ENCODE measurements at regions of chr2 and their contacts with region 1.

Region 1: GRCh38 chr2:64750817-64751285 is 97.1 kb upstream of the SERTAD2 start:
- DNase-seq: peak; percentile 99
- ATAC-seq: peak; percentile 94

Region 2: GRCh38 chr2:64523666-64524603 is 226.9 kb before region 1 on chr2 and contains the start of gene AFTPH:
- intact Hi-C with region 1: loop called (anchors 5 kb)
- DNase-seq: peak; percentile 99
- ATAC-seq: peak; percentile 99
- total RNA-seq, gene AFTPH: 14.0 TPM

Region 3: GRCh38 chr2:64644177-64645004 is 106.5 kb before region 1 on chr2:
- intact Hi-C with region 1: loop called (anchors 1 kb)
- DNase-seq: peak; percentile 92
- ATAC-seq: peak; percentile 92

Region 4: DNA sequence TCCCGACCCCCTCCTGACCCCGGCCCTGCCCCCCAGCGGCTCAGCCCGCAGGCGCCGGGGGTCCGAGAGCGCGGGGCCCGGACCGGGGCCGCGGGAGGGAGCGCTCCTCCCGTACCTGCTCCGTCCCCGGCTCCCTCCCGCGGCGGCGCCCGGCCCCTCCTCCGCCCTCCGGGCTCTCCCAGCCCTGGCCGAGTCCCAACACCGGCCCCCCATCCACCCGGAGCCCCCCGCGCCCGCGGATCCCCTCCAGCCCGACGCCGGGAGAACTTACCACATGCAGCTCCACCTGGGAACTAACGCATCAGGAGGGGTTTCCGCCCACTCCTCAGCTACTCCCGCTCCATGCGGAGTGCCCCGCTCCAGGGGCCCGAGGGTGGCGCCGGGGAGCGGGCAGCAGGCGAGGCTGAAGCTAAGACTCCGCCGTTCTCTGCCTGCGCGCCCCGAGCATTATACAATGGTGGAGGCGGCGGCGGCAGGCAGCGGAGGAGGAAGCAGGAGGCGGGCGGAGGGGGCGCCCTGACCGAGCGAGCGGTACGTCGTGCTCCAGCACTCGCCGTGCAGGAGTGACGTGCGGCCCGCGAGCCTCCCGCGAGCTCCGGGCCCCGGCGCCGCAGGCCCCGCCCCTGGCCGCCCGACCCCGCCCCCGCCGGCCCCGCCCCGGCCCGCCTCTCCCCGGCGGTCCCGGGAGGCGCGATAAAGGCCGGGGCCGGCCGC is 97.3 kb before region 1 on chr2 and contains the start of gene SERTAD2:
- intact Hi-C with region 1: loop called (anchors 1 kb)
- DNase-seq: peak; percentile 96
- ATAC-seq: peak; percentile 93
- total RNA-seq, gene SERTAD2: 13.6 TPM

Region 5: GRCh38 chr2:64767670-64768468 is 17.0 kb after region 1 on chr2:
- intact Hi-C with region 1: loop called (anchors 1 kb)
- DNase-seq: peak; percentile 92
- ATAC-seq: peak; percentile 96

Region 6: GRCh38 chr2:64831134-64831976 is 80.5 kb after region 1 on chr2:
- intact Hi-C with region 1: loop called (anchors 2 kb)
- DNase-seq: peak; percentile 93
- ATAC-seq: peak; percentile 97

Region 7: GRCh38 chr2:64859312-64860212 is 108.7 kb after region 1 on chr2:
- intact Hi-C with region 1: loop called (anchors 1 kb)
- DNase-seq: peak; percentile 92
- ATAC-seq: peak; percentile 89